ENCODE measurements at regions of chr17 and their contacts with region 1.

Region 1: GRCh38 chr17:79400989-79401703 is 209.7 kb downstream of the RBFOX3 start:
- DNase-seq: peak; percentile 55 to 79
- H3K4me3 ChIP-seq: peak overlapping the region in 1 of 2 donors; percentile 38
- H3K27ac ChIP-seq: no peak overlapping the region
- H3K4me1 ChIP-seq: peaks cover 0 to 10% (median 7%) of the 10 kb centered on the region in 4 donors
- H3K27me3 ChIP-seq: peaks cover 0 to 96% of the 10 kb centered on the region in 2 donors
- CTCF ChIP-seq: peak; percentile 67 to 95

Region 2: DNA sequence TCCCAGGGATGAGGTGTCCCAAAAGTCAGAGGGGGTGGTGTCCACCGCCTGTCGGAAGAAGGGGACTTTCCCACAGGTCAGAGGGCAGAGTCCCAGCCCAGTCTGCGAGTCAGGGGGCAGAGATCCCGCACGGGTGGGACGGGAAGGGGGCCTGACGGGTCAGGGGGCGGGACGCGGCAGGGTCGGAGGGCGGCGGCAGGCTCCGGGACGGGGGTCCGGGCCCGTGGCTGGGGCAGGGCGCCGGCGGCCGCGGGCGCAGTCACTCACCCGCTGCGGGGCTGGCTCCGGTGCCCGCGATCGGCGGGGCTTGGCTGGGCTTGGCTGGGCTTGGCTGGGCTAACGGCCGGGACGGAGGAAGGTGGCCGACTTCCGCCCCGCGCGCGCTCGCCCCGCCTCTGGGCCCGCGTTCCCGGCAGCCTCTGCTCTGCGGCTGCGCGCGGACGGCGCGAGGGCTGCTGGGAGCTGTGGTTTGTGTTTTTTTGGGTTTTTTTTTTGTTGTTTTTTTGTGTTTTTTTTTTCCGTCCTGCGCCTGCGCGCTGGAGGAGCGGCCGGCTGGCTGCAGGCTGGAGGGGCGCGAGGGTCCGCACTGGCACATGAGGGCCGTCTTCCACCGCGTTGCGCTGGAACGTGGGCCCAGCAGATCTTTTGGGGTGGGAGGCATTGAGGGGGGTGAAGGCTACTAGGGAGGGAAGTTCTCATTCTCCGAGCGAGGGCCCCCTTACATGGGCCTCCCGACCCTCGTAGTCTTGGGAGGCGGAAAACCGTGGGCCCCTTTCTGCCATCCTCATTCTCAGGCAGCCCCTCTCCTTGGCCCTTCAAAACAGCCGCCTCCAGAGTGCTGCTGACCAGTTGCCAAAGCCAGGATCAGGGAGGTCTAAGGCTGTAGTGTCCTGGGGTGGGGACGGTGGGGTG is 391.5 kb before region 1 on chr17 and contains the start of gene CANT1:
- intact Hi-C with region 1: loop called (anchors 5 kb)
- DNase-seq: peak; percentile 74 to 90
- H3K4me3 ChIP-seq: peak within 1 kb of the TSS; percentile 85 to 99
- H3K27ac ChIP-seq: peak within 1 kb of the TSS; percentile 92 to 96
- H3K4me1 ChIP-seq: peaks cover 0 to 49% (median 37%) of the 10 kb centered on the region in 4 donors
- H3K27me3 ChIP-seq: no peaks in the 10 kb centered on the region
- CTCF ChIP-seq: no peak

Region 3: GRCh38 chr17:79305768-79306423 is 95.2 kb before region 1 on chr17:
- intact Hi-C with region 1: no loop called
- DNase-seq: peak; percentile 54 to 89
- H3K4me3 ChIP-seq: peak overlapping the region; percentile 4 to 16
- H3K27ac ChIP-seq: peak overlapping the region; percentile 63 to 67
- H3K4me1 ChIP-seq: peaks cover 0 to 35% (median 24%) of the 10 kb centered on the region in 4 donors
- H3K27me3 ChIP-seq: peaks cover 0 to 17% of the 10 kb centered on the region in 2 donors
- CTCF ChIP-seq: peak in 1 of 2 experiments; percentile 19

Region 4: DNA sequence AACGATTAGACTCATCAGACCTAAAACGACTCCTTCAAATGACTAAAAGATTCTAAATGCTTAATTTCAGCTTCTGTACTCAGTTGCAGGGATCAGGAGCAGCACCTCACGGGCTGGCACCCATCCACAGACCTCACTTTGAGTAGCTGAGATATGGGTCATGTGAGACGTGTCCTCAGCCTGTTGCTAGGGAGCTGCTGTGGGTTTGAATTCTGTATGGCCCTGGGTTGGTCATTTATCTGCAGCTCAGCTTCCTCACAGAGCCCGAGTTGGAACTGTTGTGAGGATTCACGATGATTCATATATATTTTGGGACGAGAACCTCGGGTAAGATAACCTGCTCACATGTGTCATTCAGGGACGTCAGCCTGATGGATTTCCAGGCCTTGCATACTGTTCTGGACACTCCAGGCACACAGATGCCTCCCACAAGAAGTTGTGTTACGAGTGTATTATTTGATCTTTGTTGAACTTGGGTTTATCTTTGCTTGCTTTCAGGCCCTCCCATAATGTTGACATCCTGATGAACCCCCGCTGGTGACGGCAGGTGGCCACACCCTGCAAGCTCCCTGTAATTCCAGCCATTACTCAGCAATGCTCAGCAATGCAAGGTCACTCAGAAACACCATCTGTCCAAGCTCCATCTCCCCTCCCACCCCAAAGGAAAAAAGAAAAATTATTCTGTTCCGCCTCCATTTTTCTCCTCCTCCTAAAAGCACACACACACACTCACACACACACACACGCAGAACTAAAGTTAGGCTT is 72.1 kb after region 1 on chr17:
- intact Hi-C with region 1: no loop called
- DNase-seq: no peak
- H3K4me3 ChIP-seq: no peak overlapping the region
- H3K27ac ChIP-seq: no peak overlapping the region
- H3K4me1 ChIP-seq: no peaks in the 10 kb centered on the region
- H3K27me3 ChIP-seq: peaks cover 0 to 73% of the 10 kb centered on the region in 2 donors
- CTCF ChIP-seq: no peak

Region 5: DNA sequence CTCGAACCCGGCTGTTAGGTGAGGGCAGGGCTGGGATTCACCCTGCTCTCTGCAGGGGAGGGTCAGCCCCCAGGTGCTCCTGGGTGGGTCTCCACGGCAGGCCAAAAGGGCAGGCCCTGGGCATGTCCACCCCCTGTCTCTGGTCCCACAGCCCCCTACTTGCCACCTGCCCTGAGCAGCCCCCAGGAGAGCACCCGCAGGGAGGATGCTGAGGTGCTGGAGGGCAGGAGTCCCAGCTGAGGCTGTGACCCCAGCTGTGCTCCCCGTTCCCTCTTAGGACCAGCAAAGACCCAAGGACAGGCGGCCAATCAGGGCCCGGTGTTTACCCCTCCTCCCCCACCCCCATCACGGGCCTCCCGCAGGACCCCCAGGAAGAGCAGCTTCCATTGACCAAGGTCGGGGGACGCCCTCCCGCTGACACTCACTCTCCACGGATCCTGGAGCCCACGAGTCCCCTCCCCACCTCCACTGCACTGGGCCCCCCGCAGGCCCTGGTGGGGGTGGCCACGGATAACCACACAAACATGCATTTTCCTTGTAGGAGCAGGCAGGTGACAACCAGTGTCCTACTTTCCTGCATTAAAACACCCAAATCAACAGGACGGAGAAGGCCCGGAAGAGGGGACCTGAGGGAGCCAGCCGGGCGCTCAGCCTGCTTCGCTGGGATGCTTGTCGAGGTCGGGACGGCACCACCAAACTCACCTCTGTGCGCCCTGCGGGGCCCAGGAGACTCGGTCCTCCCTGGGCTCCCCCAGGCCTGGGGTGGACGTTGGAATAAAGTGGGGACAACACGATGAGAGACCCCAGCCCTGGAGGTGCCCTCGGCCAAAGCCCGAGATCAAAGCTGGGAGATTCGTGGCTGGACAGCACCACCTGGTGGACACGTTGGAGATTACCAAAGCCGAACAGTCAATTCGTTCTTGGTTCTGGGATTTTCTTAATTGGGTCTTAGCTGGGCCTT is 307.1 kb after region 1 on chr17:
- intact Hi-C with region 1: loop called (anchors 10 kb)
- DNase-seq: no peak
- H3K4me3 ChIP-seq: no peak overlapping the region
- H3K27ac ChIP-seq: no peak overlapping the region
- H3K4me1 ChIP-seq: peaks cover 0 to 6% (median 4%) of the 10 kb centered on the region in 4 donors
- H3K27me3 ChIP-seq: peaks cover 0 to 56% of the 10 kb centered on the region in 2 donors
- CTCF ChIP-seq: peak; percentile 68 to 80